Psoas muscle (tissue), 8 donors: ENCODE measurements at regions of chr4 and their contacts with region 1.

Region 1: GRCh38 chr4:132297346-132297745 is 851.7 kb upstream of the PCDH10 start:
- DNase-seq: no peak
- ATAC-seq: no peak
- H3K4me3 ChIP-seq: no peak overlapping the region
- H3K27ac ChIP-seq: no peak overlapping the region
- H3K4me1 ChIP-seq: no peaks in the 10 kb centered on the region
- H3K27me3 ChIP-seq: no peaks in the 10 kb centered on the region
- CTCF ChIP-seq: no peak

Region 2: DNA sequence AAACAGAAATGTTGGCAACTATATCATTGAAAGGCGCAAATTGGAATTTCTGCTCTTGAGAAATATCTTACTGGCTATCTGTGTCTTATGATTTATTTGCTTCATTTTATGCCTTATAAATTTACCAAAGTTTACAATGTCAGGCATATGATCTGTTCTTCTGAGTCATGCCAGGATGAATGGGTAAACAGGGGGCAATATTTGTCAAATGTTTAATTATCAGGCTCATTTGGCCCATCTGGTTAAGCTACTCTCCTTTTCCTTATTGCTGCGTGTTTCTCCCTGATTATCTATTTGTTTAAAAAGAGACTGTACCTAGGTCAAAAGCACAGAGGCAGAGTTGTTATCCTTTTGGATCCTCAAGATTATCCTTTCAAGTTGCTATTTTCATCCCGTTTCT is 52.0 kb before region 1 on chr4:
- intact Hi-C with region 1: no loop called
- DNase-seq: no peak
- ATAC-seq: no peak
- H3K4me3 ChIP-seq: no peak overlapping the region
- H3K27ac ChIP-seq: no peak overlapping the region
- H3K4me1 ChIP-seq: no peaks in the 10 kb centered on the region
- H3K27me3 ChIP-seq: no peaks in the 10 kb centered on the region
- CTCF ChIP-seq: no peak

Region 3: GRCh38 chr4:132513491-132513890 is 216.1 kb after region 1 on chr4:
- intact Hi-C with region 1: loop called in 1 of 2 experiments (anchors 5 kb)
- DNase-seq: no peak
- ATAC-seq: no peak
- H3K4me3 ChIP-seq: no peak overlapping the region
- H3K27ac ChIP-seq: no peak overlapping the region
- H3K4me1 ChIP-seq: no peaks in the 10 kb centered on the region
- H3K27me3 ChIP-seq: no peaks in the 10 kb centered on the region
- CTCF ChIP-seq: no peak